Caco-2 (cell line): ENCODE measurements at regions of chr20 and their contacts with region 1.

Region 1: GRCh38 chr20:56091629-56092314 is 86.5 kb upstream of the CBLN4 start:
- DNase-seq: no peak
- H3K4me3 ChIP-seq: no peak overlapping the region
- H3K4me3 Mint-ChIP-seq: no peak overlapping the region
- H3K27ac Mint-ChIP-seq: no peak overlapping the region
- H3K4me1 ChIP-seq: no peaks in the 10 kb centered on the region
- H3K4me1 Mint-ChIP-seq: no peaks in the 10 kb centered on the region
- H3K27me3 ChIP-seq: no peaks in the 10 kb centered on the region
- H3K27me3 Mint-ChIP-seq: no peaks in the 10 kb centered on the region
- CTCF ChIP-seq: no peak

Region 2: GRCh38 chr20:55855052-55855451 is 236.7 kb before region 1 on chr20:
- CTCF ChIA-PET with region 1: no interaction called
- POLR2A ChIA-PET with region 1: no interaction called
- intact Hi-C with region 1: loop called (anchors 10 kb)
- DNase-seq: no peak
- H3K4me3 ChIP-seq: no peak overlapping the region
- H3K4me3 Mint-ChIP-seq: no peak overlapping the region
- H3K27ac Mint-ChIP-seq: no peak overlapping the region
- H3K4me1 ChIP-seq: no peaks in the 10 kb centered on the region
- H3K4me1 Mint-ChIP-seq: no peaks in the 10 kb centered on the region
- H3K27me3 ChIP-seq: no peaks in the 10 kb centered on the region; the same call in 1 of the 2 replicates
- H3K27me3 Mint-ChIP-seq: no peaks in the 10 kb centered on the region
- CTCF ChIP-seq: no peak

Region 3: DNA sequence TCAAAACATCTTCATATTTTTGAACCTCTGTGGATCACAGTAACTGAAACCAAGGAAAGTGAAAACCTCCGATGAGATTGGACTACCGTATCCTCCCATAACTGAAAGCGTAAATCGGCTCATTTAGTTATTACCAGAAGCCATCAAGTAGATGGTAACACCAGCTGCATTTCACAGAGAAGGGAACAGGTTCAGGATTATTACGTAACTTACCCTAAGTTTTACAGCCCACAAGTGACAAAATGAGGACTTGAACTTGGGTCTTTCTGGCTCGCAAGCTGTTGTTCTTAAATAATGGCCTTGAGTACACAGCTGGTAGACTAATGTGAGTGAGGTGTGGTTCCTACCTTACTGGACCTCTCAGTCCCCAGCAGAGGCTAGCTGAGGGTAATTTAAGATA is 48.5 kb before region 1 on chr20:
- CTCF ChIA-PET with region 1: no interaction called
- POLR2A ChIA-PET with region 1: no interaction called
- intact Hi-C with region 1: no loop called
- DNase-seq: no peak
- H3K4me3 ChIP-seq: no peak overlapping the region
- H3K4me3 Mint-ChIP-seq: no peak overlapping the region
- H3K27ac Mint-ChIP-seq: no peak overlapping the region
- H3K4me1 ChIP-seq: no peaks in the 10 kb centered on the region
- H3K4me1 Mint-ChIP-seq: no peaks in the 10 kb centered on the region
- H3K27me3 ChIP-seq: no peaks in the 10 kb centered on the region
- H3K27me3 Mint-ChIP-seq: no peaks in the 10 kb centered on the region
- CTCF ChIP-seq: no peak

Region 4: GRCh38 chr20:56143759-56144158 is 52.0 kb after region 1 on chr20:
- CTCF ChIA-PET with region 1: no interaction called
- POLR2A ChIA-PET with region 1: no interaction called
- intact Hi-C with region 1: loop called (anchors 10 kb)
- DNase-seq: no peak
- H3K4me3 ChIP-seq: no peak overlapping the region
- H3K4me3 Mint-ChIP-seq: no peak overlapping the region
- H3K27ac Mint-ChIP-seq: no peak overlapping the region
- H3K4me1 ChIP-seq: no peaks in the 10 kb centered on the region
- H3K4me1 Mint-ChIP-seq: no peaks in the 10 kb centered on the region
- H3K27me3 ChIP-seq: no peaks in the 10 kb centered on the region
- H3K27me3 Mint-ChIP-seq: no peaks in the 10 kb centered on the region
- CTCF ChIP-seq: no peak